Activated naive CD8-positive, alpha-beta T cell treated with anti-CD3 and anti-CD28 coated beads, Interleukin-2, amount 10 ng/mL, durations not matched to agents 7 days and 5 days (primary cell): ENCODE measurements at regions of chr21 and their contacts with region 1.

Region 1: GRCh38 chr21:33947451-33948095 is 32.0 kb upstream of the ATP5PO start:
- DNase-seq: peak; percentile 70
- ATAC-seq: peak; percentile 65
- H3K4me3 Mint-ChIP-seq: peak overlapping the region; percentile 76
- H3K27ac Mint-ChIP-seq: peak overlapping the region; percentile 98
- H3K4me1 Mint-ChIP-seq: peaks cover 55% of the 10 kb centered on the region
- H3K27me3 Mint-ChIP-seq: no peaks in the 10 kb centered on the region

Region 2: GRCh38 chr21:33641336-33642026 is 306.1 kb before region 1 on chr21 and contains the start of gene CRYZL1:
- POLR2A ChIA-PET with region 1: no interaction called
- DNase-seq: peak; percentile 99
- ATAC-seq: peak; percentile 79
- H3K4me3 Mint-ChIP-seq: peak within 1 kb of the TSS; percentile 99
- H3K27ac Mint-ChIP-seq: peak within 1 kb of the TSS; percentile 94
- H3K4me1 Mint-ChIP-seq: peaks cover 17% of the 10 kb centered on the region
- H3K27me3 Mint-ChIP-seq: peaks cover 28% of the 10 kb centered on the region
- total RNA-seq, gene CRYZL1: 39.2 to 45.7 TPM

Region 3: DNA sequence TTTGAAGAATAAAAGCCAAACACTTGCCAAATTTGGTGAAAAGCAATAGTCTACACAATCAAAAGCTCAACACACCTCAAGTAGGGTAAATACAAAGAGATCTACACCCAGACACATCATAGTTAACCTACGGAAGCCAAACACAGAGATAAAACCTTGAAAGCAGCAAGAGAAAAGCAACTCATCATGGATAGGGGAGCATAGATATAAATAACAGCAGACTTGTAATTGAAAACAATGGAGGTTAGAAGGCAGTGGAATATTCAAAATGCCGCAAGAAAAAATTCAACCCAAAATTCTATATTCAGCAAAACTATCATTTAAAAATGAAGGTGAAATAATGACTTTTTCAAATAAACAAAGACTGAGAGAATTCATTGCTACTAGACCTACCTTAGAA is 200.2 kb before region 1 on chr21:
- POLR2A ChIA-PET with region 1: no interaction called
- DNase-seq: no peak
- ATAC-seq: no peak
- H3K4me3 Mint-ChIP-seq: no peak overlapping the region
- H3K27ac Mint-ChIP-seq: no peak overlapping the region
- H3K4me1 Mint-ChIP-seq: no peaks in the 10 kb centered on the region
- H3K27me3 Mint-ChIP-seq: peaks cover under 1% of the 10 kb centered on the region

Region 4: GRCh38 chr21:33924079-33924765 is 23.4 kb before region 1 on chr21:
- POLR2A ChIA-PET with region 1: interaction called, 22 read pairs
- DNase-seq: peak; percentile 92
- ATAC-seq: peak; percentile 94
- H3K4me3 Mint-ChIP-seq: no peak overlapping the region
- H3K27ac Mint-ChIP-seq: no peak overlapping the region
- H3K4me1 Mint-ChIP-seq: peaks cover 11% of the 10 kb centered on the region
- H3K27me3 Mint-ChIP-seq: peaks cover 4% of the 10 kb centered on the region

Region 5: GRCh38 chr21:33964706-33965325 is 17.2 kb after region 1 on chr21:
- POLR2A ChIA-PET with region 1: interaction called, 10 read pairs
- DNase-seq: no peak
- ATAC-seq: no peak
- H3K4me3 Mint-ChIP-seq: no peak overlapping the region
- H3K27ac Mint-ChIP-seq: no peak overlapping the region
- H3K4me1 Mint-ChIP-seq: peaks cover 8% of the 10 kb centered on the region
- H3K27me3 Mint-ChIP-seq: no peaks in the 10 kb centered on the region

Region 6: DNA sequence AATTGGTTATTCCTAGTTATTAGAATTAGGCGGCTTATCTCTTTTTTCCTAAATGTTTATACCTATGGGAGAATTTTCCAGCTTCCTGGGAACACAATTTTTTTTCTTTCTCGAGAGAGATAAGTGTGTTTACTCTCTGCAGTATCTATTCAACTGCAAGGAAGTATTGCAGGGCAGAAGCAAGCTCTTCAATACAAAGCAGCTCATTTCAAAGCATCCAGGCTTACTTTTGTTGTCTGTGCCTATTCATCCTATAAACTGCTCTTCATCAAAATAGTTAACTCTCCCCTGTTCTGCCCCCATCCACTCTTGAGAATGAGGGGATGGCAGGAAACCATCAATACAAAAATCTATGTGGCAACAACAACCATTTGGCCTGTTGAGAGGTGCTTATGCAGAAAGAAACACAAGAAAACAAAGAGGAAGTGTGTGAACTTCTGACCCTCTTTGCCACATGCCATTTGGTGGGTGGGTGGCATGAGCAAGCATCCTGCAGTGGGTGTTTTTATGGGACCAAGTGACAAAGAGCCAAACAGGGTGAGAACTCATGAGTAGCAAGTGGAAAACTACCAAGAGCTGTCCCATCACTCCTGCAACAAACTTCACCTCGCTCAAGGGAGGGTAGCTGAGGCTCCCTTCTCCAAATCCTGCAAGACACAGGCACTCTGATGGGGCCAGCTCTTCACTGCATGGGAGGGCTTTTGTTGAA is 75.2 kb after region 1 on chr21:
- POLR2A ChIA-PET with region 1: interaction called, 12 read pairs
- DNase-seq: no peak
- ATAC-seq: peak; percentile 28
- H3K4me3 Mint-ChIP-seq: no peak overlapping the region
- H3K27ac Mint-ChIP-seq: no peak overlapping the region
- H3K4me1 Mint-ChIP-seq: peaks cover 28% of the 10 kb centered on the region
- H3K27me3 Mint-ChIP-seq: no peaks in the 10 kb centered on the region

Region 7: GRCh38 chr21:34078915-34079314 is 131.3 kb after region 1 on chr21:
- POLR2A ChIA-PET with region 1: interaction called, 52 read pairs
- DNase-seq: no peak
- ATAC-seq: no peak
- H3K4me3 Mint-ChIP-seq: peak overlapping the region; percentile 61
- H3K27ac Mint-ChIP-seq: peak overlapping the region; percentile 49
- H3K4me1 Mint-ChIP-seq: peaks cover 81% of the 10 kb centered on the region
- H3K27me3 Mint-ChIP-seq: no peaks in the 10 kb centered on the region

Region 8: DNA sequence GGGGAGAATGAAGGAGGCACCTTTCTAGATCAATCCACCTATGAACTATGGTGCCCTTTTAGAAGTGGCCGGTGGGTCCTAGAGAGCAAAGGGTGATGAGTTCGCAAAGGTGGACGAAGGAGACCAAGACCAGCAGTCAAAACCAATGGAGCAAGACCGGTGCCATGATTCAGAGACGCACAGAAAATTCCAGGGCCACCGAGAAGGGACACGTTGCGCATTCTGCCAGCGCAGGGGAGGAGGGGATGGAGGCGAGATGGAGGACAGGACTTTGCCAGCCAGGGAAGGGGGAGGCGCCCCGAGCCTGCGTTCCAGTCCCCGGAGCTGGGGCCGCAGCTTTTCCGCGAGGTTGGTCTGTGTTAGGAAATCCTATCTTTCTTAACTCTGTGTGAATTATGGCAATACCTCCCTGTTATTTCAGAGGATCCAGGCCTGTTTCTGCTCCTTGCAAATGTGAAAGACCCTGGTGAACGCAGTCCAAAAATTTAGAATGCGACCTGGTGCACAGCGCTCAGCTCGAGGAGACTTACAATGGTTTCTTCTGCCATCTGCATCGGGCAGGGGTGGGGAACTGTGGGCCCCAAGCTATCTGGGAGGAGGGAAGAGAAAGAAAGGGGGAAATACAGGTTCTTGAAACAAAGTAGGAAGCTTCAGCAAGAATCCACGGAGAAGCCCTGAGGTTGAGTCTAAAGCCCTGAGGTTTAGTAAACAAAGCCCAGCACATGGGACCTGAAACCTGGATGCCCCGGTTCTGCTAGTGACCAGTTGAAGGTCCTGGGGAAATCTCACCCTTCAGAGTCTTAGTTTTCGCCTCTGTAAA is 255.2 kb after region 1 on chr21:
- POLR2A ChIA-PET with region 1: interaction called, 14 read pairs
- DNase-seq: no peak
- ATAC-seq: no peak
- H3K4me3 Mint-ChIP-seq: peak overlapping the region; percentile 85
- H3K27ac Mint-ChIP-seq: peak overlapping the region; percentile 78
- H3K4me1 Mint-ChIP-seq: peaks cover 48% of the 10 kb centered on the region
- H3K27me3 Mint-ChIP-seq: no peaks in the 10 kb centered on the region